ENCODE measurements at regions of chr1 and their contacts with region 1.

Region 1: DNA sequence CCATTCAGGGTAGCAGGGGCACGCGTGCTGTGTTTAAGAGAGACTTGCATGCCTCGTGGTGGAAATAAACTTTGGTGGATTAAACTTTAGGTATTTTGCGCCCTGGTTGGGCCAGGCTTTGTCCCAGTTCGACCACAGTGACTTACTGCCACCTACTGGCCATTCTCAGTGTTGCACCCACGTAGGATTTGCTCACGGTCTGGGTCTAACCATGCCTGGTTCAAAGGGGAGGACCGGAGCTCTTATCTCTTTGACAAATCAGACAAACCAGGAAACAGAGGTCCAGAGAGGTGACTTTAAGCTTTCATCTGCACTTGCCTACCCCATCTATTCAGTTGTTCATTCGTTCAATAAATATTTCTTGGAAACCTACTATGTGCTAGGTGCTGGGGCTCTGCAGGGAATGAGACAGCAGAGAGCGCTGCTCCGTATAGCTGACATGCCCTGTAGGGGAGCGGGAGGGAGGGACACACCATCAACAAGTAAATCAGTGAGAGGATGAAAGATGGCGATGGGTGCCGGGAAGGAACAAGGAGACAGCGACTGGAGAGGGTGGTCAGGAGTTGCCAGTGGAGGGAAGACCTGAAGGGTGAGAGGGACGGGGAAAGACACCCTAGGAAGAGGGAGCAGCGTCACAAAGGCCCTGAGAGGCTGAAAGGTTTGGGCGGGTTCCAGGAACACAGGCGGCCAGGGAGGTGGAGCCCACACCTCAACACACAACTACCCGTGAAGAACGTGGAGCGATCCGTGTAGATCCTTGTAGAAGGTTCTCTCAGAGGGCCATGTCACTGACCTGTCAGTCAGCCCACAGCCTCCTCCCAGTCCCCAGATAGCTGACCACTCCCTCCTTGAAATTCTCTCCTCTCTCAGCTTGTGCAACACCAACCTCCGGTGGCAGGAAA is 27.2 kb upstream of the TINAGL1 start:
- DNase-seq: peak; percentile 93

Region 2: GRCh38 chr1:31394628-31395193 is 154.4 kb before region 1 on chr1:
- intact Hi-C with region 1: loop called in 1 of 2 experiments (anchors 10 kb)
- DNase-seq: peak; percentile 95

Region 3: GRCh38 chr1:31531177-31531999 is 17.8 kb before region 1 on chr1:
- intact Hi-C with region 1: no loop called
- DNase-seq: no peak

Measured in posterior vena cava (tissue), 2 donors.